A549 (cell line): ENCODE measurements at regions of chr6 and their contacts with region 1.

Region 1: GRCh38 chr6:1436334-1437306 is 47.2 kb downstream of the FOXF2 start:
- DNase-seq: peak; percentile 61 to 62
- ATAC-seq: peak; percentile 96 to 98
- H3K4me3 ChIP-seq: no peak overlapping the region
- H3K27ac ChIP-seq: peak overlapping the region in 1 of 2 experiments; percentile 51; a peak in 3 of 6 replicates
- H3K4me1 ChIP-seq: peaks cover 5% of the 10 kb centered on the region; the same call in 2 of the 3 replicates
- CTCF ChIP-seq: peak; percentile 67
- EP300 ChIP-seq: no peak
- POLR2A ChIP-seq: no peak
- RAD21 ChIP-seq: peak; percentile 77 to 82

Region 2: GRCh38 chr6:1449896-1450295 is 13.3 kb after region 1 on chr6:
- CTCF ChIA-PET with region 1: interaction called, 23 read pairs
- POLR2A ChIA-PET with region 1: no interaction called
- DNase-seq: no peak
- ATAC-seq: no peak
- H3K4me3 ChIP-seq: no peak overlapping the region
- H3K27ac ChIP-seq: no peak overlapping the region
- H3K4me1 ChIP-seq: no peaks in the 10 kb centered on the region
- CTCF ChIP-seq: no peak
- EP300 ChIP-seq: no peak
- POLR2A ChIP-seq: no peak
- RAD21 ChIP-seq: no peak

Region 3: GRCh38 chr6:1581120-1581991 is 144.7 kb after region 1 on chr6:
- CTCF ChIA-PET with region 1: no interaction called
- POLR2A ChIA-PET with region 1: no interaction called
- DNase-seq: no peak
- ATAC-seq: no peak
- H3K4me3 ChIP-seq: no peak overlapping the region
- H3K27ac ChIP-seq: no peak overlapping the region
- H3K4me1 ChIP-seq: no peaks in the 10 kb centered on the region
- CTCF ChIP-seq: no peak
- EP300 ChIP-seq: no peak
- POLR2A ChIP-seq: no peak
- RAD21 ChIP-seq: no peak